CD8-positive, alpha-beta T cell (primary cell): ENCODE measurements at regions of chr15 and their contacts with region 1.

Region 1: GRCh38 chr15:101652098-101652782 is at the start of gene TM2D3:
- DNase-seq: peak; percentile 89 to 98 (median 95)
- ATAC-seq: peak; percentile 92
- H3K4me3 ChIP-seq: peak within 1 kb of the TSS; percentile 91 to 99
- H3K4me3 Mint-ChIP-seq: peak within 1 kb of the TSS; percentile 90
- H3K27ac ChIP-seq: peak within 1 kb of the TSS; percentile 97
- H3K27ac Mint-ChIP-seq: peak within 1 kb of the TSS; percentile 96
- H3K4me1 ChIP-seq: peaks cover 26% of the 10 kb centered on the region
- H3K4me1 Mint-ChIP-seq: peaks cover 39% of the 10 kb centered on the region
- H3K27me3 ChIP-seq: no peaks in the 10 kb centered on the region
- H3K27me3 Mint-ChIP-seq: no peaks in the 10 kb centered on the region
- CTCF ChIP-seq: peak; percentile 76
- total RNA-seq, gene TM2D3: 76.1 to 76.7 TPM

Region 2: DNA sequence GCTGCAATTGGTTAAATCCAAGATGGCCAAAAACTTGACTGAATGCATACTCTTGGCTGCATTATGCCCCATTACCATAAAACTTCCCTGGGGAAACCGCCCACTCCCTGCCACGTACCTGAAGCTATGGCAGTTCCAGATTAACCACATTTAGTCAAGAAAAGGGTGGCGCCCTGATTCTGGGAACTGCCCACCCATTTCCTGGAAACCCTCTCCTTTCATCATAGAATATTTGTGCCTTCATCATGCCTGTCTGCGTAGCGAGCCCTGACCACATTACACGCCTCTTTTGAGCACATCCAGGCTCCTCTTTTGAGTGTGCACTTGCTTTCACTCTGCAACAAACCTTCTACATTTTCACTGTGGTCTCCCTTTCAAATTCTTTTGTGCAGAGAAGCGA is 1055.4 kb before region 1 on chr15:
- CTCF ChIA-PET with region 1: no interaction called
- POLR2A ChIA-PET with region 1: no interaction called
- intact Hi-C with region 1: loop called in 1 of 2 experiments (anchors 5 kb)
- DNase-seq: peak; percentile 49 to 95 (median 84)
- ATAC-seq: peak; percentile 86
- H3K4me3 ChIP-seq: peak overlapping the region; percentile 41 to 47
- H3K4me3 Mint-ChIP-seq: peak overlapping the region; percentile 85
- H3K27ac ChIP-seq: peak overlapping the region; percentile 70 to 85
- H3K27ac Mint-ChIP-seq: peak overlapping the region; percentile 97
- H3K4me1 ChIP-seq: peaks cover 88% of the 10 kb centered on the region
- H3K4me1 Mint-ChIP-seq: peaks cover 77% of the 10 kb centered on the region
- H3K27me3 ChIP-seq: no peaks in the 10 kb centered on the region
- H3K27me3 Mint-ChIP-seq: no peaks in the 10 kb centered on the region
- CTCF ChIP-seq: no peak

Region 3: GRCh38 chr15:101014921-101015841 is 637.1 kb before region 1 on chr15:
- CTCF ChIA-PET with region 1: no interaction called
- POLR2A ChIA-PET with region 1: no interaction called
- intact Hi-C with region 1: loop called (anchors 10 kb)
- DNase-seq: peak; percentile 17 to 78 (median 68)
- ATAC-seq: peak; percentile 42
- H3K4me3 ChIP-seq: no peak overlapping the region
- H3K4me3 Mint-ChIP-seq: no peak overlapping the region
- H3K27ac ChIP-seq: no peak overlapping the region
- H3K27ac Mint-ChIP-seq: no peak overlapping the region
- H3K4me1 ChIP-seq: no peaks in the 10 kb centered on the region
- H3K4me1 Mint-ChIP-seq: no peaks in the 10 kb centered on the region
- H3K27me3 ChIP-seq: no peaks in the 10 kb centered on the region
- H3K27me3 Mint-ChIP-seq: peaks cover 9% of the 10 kb centered on the region
- CTCF ChIP-seq: peak; percentile 73

Region 4: DNA sequence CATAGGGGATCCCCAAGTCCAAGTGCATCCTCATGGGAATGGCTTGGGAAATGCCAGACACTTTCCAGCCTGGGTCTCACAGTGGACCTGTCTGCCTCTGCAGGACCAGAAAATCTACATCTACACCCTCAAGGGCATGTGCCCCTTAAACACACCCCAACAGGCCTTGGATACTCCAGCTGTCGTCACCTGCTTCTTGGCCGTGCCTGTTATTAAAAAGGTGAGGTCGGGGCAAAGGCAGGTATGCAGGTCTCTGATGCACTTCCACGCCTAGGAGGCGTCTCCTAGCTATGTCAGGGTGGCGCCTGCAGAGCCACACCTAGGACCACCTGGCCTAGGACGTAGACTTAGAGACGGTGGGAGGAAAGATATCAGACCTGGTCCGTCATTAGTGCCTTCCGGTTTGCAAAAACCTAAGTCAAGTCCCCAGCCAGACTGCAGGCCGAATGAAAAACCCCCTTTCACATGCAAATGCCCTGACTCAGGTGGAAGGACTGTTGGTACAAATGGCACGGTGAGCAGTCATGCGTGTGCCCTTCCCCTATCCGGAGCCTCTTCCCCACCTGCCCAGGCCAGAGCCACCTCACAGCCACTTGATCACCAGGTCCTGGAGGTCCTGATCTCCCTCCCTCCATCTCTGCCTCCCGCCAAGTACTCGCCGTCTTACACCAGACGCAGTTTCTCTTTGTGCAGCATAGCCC is 589.6 kb before region 1 on chr15:
- CTCF ChIA-PET with region 1: no interaction called
- POLR2A ChIA-PET with region 1: no interaction called
- intact Hi-C with region 1: no loop called
- DNase-seq: peak in 1 of 9 experiments; percentile 2
- ATAC-seq: no peak
- H3K4me3 ChIP-seq: no peak overlapping the region
- H3K4me3 Mint-ChIP-seq: no peak overlapping the region
- H3K27ac ChIP-seq: no peak overlapping the region
- H3K27ac Mint-ChIP-seq: no peak overlapping the region
- H3K4me1 ChIP-seq: no peaks in the 10 kb centered on the region
- H3K4me1 Mint-ChIP-seq: no peaks in the 10 kb centered on the region
- H3K27me3 ChIP-seq: no peaks in the 10 kb centered on the region
- H3K27me3 Mint-ChIP-seq: no peaks in the 10 kb centered on the region
- CTCF ChIP-seq: no peak

Region 5: GRCh38 chr15:101333401-101333800 is 318.8 kb before region 1 on chr15:
- CTCF ChIA-PET with region 1: no interaction called
- POLR2A ChIA-PET with region 1: no interaction called
- intact Hi-C with region 1: loop called in 1 of 2 experiments (anchors 2 kb)
- DNase-seq: peak in 2 of 9 experiments; percentile 30 to 42
- ATAC-seq: peak; percentile 21
- H3K4me3 ChIP-seq: peak overlapping the region in 1 of 2 experiments; percentile 33
- H3K4me3 Mint-ChIP-seq: no peak overlapping the region
- H3K27ac ChIP-seq: peak overlapping the region; percentile 81 to 86
- H3K27ac Mint-ChIP-seq: peak overlapping the region; percentile 77
- H3K4me1 ChIP-seq: peaks cover 15% of the 10 kb centered on the region
- H3K4me1 Mint-ChIP-seq: peaks cover 25% of the 10 kb centered on the region
- H3K27me3 ChIP-seq: no peaks in the 10 kb centered on the region
- H3K27me3 Mint-ChIP-seq: no peaks in the 10 kb centered on the region
- CTCF ChIP-seq: no peak

Region 6: DNA sequence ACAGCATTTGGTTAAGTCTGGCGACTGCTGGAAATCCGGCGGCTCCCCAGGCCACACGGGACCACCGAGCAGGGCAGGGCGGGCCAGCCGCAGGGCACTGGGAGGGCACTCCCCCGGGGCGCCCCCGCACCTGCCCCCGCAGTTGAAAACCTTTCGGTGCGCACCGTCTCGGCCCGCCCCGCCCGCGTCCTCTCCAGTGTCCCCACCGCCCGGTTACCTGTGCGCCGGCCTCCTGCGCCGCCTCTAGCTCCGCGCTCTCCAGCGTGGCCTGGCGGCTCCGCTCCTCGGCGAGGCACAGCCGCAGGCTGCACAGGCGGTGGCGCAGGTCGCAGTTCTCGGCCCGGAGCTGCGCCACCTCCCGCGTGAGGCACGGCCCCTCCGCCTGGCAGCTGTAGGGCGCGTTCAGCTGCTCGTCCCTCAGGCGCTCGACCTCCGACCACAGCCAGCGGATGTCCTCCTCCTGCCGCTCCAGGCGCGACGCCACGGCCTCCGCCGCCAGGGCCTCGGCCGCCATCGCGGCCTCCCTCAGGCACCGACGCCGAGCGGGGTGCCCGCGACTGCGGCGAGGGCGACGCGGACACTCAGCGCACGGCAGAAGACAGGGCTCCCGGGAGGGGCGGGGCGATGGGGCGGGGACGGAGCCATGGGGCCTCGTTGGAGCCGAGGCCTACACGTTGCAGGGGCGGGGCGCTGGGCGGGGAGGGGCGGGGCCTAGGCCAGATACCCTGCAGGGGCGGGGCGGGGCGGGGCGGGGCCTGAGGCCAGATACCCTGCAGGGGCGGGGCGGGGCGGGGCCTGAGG is 71.8 kb after region 1 on chr15 and contains the start of gene TARS3:
- CTCF ChIA-PET with region 1: no interaction called
- POLR2A ChIA-PET with region 1: interaction called, 7 read pairs
- intact Hi-C with region 1: loop called (anchors 1 kb)
- DNase-seq: peak; percentile 94 to 98 (median 96)
- ATAC-seq: peak; percentile 93
- H3K4me3 ChIP-seq: peak within 1 kb of the TSS; percentile 40 to 71
- H3K4me3 Mint-ChIP-seq: peak within 1 kb of the TSS; percentile 90
- H3K27ac ChIP-seq: peak within 1 kb of the TSS; percentile 65 to 87
- H3K27ac Mint-ChIP-seq: peak within 1 kb of the TSS; percentile 90
- H3K4me1 ChIP-seq: peaks cover 18% of the 10 kb centered on the region
- H3K4me1 Mint-ChIP-seq: peaks cover 35% of the 10 kb centered on the region
- H3K27me3 ChIP-seq: no peaks in the 10 kb centered on the region
- H3K27me3 Mint-ChIP-seq: no peaks in the 10 kb centered on the region
- CTCF ChIP-seq: no peak
- total RNA-seq, gene TARS3: 12.7 to 13.7 TPM